Posterior cingulate gyrus (tissue), 11 donors: ENCODE measurements at regions of chr16 and their contacts with region 1.

Region 1: GRCh38 chr16:10039220-10040096 is 142.8 kb downstream of the GRIN2A start:
- DNase-seq: peak in 9 of 10 donors; percentile 40 to 95 (median 64)

Region 2: GRCh38 chr16:9647981-9648712 is 391.3 kb before region 1 on chr16:
- intact Hi-C with region 1: loop called (anchors 10 kb)
- DNase-seq: no peak

Region 3: GRCh38 chr16:10122546-10122945 is 83.1 kb after region 1 on chr16:
- intact Hi-C with region 1: loop called (anchors 10 kb)
- DNase-seq: no peak

Region 4: DNA sequence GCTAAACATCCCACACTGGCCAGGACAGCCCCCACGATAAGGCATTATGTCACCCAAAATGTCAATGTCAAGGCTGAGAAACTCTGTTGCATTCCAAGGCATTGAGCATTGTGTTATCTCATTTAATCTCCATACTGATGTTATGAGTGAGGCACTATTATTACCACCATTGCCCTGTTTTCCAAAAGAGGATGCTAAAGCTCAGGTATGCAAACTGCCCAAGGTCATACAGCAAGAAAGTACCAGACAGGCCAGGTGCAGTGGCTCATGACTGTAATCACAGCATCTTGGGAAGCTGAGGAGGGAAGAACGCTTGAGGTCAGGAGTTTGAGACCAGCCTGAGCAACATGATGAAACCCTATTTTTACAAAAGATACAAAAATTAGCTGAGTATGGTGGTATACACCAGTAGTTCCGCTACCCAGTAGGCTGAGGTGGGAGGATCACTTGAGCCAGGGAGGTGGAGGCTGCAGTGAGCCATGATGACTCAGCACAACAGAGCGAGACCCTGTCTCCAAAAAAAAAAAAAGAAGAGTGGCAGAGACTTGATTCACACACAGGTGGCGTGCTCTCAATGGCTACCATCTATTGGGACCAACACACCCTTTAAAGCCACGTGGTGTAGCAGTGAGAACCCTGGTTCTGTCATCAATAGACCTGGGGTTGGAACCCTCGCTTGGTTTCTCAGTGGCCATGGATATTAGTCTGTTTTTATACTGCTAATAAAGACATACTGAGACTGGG is 201.6 kb after region 1 on chr16:
- intact Hi-C with region 1: no loop called
- DNase-seq: no peak